Common myeloid progenitor, CD34-positive (primary cell): ENCODE measurements at regions of chr1 and their contacts with region 1.

Region 1: DNA sequence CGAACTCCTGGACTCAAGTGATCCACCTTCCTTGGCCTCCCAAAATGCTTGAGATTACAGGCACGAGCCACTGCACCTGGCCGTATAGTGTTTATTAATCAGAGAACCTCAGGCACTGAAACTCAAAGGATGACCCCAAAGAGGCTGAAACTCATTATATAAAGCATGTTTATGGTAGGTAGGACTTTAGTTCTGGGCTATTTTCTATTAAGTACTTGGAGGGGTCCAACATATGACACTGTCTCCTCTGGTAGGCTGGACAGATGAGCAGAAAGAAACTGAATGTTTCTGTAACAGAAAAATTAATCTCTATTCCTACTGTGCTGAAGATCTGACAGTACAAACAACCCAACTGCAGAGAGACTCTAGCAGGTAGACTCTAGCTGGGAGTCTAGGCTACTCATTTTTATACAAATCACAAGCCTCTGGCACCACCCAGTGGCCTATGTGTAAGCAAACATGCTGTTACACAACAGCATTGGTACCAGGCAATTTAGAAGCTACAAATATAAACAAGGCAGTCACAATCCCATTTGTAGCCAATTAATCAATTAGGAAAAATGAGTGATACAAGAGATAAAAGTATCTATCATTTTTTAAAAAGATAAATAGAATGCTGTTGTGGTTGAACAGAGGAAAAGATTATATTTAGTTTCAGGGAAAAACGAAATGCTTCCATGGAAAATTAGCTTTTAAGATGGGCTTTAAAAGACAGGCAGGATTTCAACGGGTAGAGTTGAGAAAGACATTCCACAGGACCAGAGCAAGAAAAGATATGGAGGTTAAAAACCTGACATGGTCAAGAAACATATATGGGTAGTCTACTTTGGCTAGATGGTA is 10.4 kb downstream of the DCAF8 start:
- DNase-seq: peak; percentile 74 to 87 (median 84)
- H3K4me3 ChIP-seq: no peak overlapping the region
- H3K27ac ChIP-seq: peak overlapping the region; percentile 36 to 51
- H3K4me1 ChIP-seq: peaks cover 0 to 8% (median 0%) of the 10 kb centered on the region in 4 experiments
- H3K27me3 ChIP-seq: no peaks in the 10 kb centered on the region

Region 2: GRCh38 chr1:160061369-160062229 is 190.3 kb before region 1 on chr1:
- CTCF ChIA-PET with region 1: no interaction called
- POLR2A ChIA-PET with region 1: no interaction called
- DNase-seq: no peak
- H3K4me3 ChIP-seq: no peak overlapping the region
- H3K27ac ChIP-seq: no peak overlapping the region
- H3K4me1 ChIP-seq: no peaks in the 10 kb centered on the region
- H3K27me3 ChIP-seq: peaks cover 0 to 11% (median 0%) of the 10 kb centered on the region in 5 experiments

Region 3: DNA sequence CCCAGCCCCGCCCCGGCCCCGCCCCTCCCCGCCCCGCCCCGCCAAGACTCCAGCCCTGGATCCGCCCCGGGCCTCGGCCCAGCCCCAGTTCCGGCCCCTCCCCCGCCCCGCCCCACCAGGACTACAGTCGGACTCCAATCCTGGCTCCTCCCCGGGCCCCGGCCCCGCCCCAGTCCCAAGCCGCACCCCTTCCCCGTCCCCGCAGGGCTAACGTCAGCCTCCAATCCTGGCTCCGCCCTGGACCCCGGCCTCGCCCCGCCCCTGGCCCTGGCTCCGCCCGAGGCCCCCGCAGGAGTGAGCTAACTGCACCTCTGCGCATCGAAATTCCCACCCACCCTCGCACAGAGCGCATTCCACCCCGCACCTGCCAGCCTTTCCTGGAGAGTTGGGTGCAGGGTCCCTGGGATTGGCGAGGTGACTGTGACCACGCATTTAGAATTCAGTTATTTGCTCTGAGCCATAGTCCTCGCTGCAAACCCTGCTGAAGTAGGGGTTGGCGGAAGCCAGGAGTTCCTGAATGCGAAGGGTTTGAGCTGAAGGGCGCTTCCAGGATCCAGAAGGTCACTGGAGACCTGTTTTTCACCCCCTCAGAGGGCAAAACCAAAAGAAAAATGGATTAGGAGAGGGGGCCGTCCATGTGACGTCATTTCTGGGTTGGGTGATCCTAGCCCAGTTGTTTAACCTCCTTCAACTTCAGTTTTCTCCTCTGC is 152.9 kb before region 1 on chr1:
- CTCF ChIA-PET with region 1: interaction called, 24 read pairs
- POLR2A ChIA-PET with region 1: no interaction called
- DNase-seq: peak; percentile 92 to 96 (median 95)
- H3K4me3 ChIP-seq: peak overlapping the region; percentile 37 to 89 (median 71)
- H3K27ac ChIP-seq: peak overlapping the region; percentile 41 to 87
- H3K4me1 ChIP-seq: peaks cover 0 to 48% (median 35%) of the 10 kb centered on the region in 4 experiments
- H3K27me3 ChIP-seq: no peaks in the 10 kb centered on the region

Region 4: DNA sequence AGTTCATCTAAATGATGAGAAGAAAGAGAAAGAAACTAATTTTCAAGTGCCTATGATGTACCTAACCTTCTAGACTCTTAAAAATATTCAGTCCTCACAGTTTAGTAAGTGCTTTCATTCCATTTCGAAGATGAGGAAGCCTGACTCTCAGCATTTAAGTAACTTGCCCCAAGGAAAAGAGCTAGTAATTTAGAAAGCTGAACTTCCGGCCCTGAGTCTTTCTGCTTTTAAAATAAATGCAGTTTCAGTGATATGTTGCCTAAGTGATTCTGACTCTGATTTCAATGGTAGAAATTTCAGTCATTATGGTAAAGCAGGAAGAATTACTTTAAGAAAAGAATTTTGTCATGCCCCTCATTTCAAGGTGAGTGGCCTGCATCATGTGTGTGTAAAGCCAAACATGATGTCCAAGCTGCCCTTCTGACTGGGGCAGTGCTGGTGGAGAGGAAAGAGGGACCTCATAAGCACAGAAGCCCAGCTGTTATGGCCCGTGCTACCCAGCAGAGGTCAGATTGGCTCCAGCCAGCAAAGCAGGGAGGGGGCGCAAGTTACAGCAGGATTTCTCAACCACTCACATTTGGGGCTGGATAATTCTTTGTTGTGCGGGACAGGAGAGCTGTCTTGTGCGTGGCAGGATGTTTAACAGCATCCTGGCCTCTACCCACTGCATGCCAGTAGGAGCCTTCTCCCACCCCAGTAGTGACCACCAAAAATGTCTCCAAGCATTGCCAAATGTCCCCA is 89.8 kb before region 1 on chr1:
- CTCF ChIA-PET with region 1: interaction called, 12 read pairs
- POLR2A ChIA-PET with region 1: no interaction called
- DNase-seq: peak; percentile 18 to 33 (median 29)
- H3K4me3 ChIP-seq: no peak overlapping the region
- H3K27ac ChIP-seq: no peak overlapping the region
- H3K4me1 ChIP-seq: peaks cover 4 to 23% (median 11%) of the 10 kb centered on the region in 4 experiments
- H3K27me3 ChIP-seq: peaks cover 0 to 2% (median 0%) of the 10 kb centered on the region in 5 experiments

Region 5: DNA sequence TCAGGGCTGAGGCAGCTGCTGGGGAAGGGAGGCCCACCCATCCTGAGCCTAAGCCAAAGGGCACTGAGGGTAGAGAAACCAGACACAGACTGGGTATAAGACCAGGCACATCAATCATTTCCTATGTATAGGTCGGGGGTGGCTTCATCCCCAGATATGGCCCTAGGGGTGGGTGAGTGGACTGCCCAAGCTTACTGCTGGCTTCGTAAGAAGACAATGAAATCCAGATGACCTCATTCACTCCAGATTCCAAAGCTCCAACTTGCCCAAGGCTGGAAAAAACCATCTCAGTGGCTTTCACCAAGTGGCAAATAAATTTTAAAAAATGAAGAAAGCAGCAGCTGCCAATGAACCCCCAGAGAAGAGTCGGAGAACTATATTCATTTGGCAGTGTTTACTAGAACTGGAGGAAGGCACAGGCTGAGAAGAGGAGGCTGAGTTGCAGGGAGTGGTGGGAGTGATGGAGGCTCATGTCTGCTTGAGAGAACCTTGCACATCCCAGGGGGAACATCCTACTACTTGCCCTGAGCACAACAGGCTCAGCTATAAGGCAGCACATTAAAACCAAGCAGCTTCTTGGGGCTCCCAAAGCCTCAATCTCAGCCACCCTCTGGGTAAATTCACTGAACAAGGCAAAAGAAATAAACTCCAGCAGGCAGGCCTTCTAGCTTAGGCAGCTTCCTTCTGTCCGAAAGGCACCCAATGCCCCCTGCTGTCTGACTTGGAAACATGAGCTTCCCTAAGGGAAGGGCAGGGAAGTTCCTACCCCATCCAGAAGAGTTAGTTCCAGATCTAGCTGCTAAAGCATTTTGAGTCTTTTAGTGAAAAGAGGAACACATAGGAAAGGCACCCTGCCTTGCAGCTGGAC is 32.6 kb before region 1 on chr1:
- CTCF ChIA-PET with region 1: interaction called, 15 read pairs
- POLR2A ChIA-PET with region 1: no interaction called
- DNase-seq: peak; percentile 15 to 40 (median 34)
- H3K4me3 ChIP-seq: no peak overlapping the region
- H3K27ac ChIP-seq: no peak overlapping the region
- H3K4me1 ChIP-seq: no peaks in the 10 kb centered on the region
- H3K27me3 ChIP-seq: no peaks in the 10 kb centered on the region

Region 6: GRCh38 chr1:160261893-160262794 is 10.2 kb after region 1 on chr1 and contains the start of gene DCAF8:
- CTCF ChIA-PET with region 1: interaction called, 22 read pairs
- POLR2A ChIA-PET with region 1: interaction called, 5 read pairs
- DNase-seq: peak; percentile 97 to 99 (median 99)
- H3K4me3 ChIP-seq: peak within 1 kb of the TSS; percentile 88 to 99 (median 97)
- H3K27ac ChIP-seq: peak within 1 kb of the TSS; percentile 99
- H3K4me1 ChIP-seq: peaks cover 8 to 34% (median 21%) of the 10 kb centered on the region in 4 experiments
- H3K27me3 ChIP-seq: no peaks in the 10 kb centered on the region